Dorsolateral prefrontal cortex (tissue), 120 donors: ENCODE measurements at regions of chr3 and their contacts with region 1.

Region 1: DNA sequence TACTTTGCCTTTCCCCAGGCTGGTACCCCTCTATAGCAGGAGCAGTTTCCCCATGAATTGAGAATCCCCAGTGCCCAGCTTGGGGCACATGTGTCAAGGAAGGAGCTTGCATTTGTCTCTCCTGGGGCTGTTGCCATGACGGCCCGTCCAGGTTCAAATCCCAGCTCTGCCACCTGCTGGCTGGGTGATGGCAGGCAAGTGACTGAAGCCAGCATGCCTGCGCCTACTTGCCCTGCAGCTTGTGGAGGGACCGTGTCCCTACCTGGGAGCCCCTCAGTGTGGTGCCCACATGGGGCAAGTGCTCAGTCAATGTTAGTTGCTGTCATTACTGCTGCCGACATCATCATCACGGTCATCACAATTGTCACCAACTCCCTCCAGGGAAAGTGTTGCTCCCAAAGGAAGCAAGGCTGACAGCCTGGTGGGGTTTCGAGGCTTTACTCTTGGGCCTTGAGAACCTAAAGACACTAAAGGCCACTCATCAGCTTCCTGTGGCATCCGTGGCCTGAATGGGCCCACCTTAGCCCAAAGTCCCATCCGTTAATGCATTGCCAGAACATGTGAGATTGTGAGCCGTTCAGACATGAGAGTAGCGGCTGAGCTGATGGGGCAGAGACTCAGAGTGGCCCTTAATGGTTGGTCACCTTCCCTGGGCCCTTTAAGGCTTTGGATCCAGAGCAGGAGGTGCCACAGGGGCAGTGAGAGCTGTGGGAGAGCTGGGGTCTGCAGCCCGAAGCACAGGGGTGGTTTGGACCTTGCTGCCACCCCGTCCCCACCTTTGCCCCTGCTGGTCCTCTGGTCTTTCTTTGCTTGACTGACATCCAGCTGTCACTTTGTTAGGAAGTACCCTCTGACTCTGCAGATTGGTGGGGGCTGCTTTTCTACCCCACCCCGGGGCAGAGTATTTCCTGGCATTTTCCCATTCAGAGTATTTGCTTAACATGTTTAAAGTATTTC is 144.3 kb downstream of the DNAJB8 start:
- DNase-seq: peak in 5 of 10 donors; percentile 10 to 59 (median 49)
- H3K4me3 ChIP-seq: no peak overlapping the region
- H3K27ac ChIP-seq: no peak overlapping the region
- H3K27me3 ChIP-seq: no peaks in the 10 kb centered on the region
- CTCF ChIP-seq: peak in 54 of 56 donors; percentile 29 to 75 (median 56)

Region 2: DNA sequence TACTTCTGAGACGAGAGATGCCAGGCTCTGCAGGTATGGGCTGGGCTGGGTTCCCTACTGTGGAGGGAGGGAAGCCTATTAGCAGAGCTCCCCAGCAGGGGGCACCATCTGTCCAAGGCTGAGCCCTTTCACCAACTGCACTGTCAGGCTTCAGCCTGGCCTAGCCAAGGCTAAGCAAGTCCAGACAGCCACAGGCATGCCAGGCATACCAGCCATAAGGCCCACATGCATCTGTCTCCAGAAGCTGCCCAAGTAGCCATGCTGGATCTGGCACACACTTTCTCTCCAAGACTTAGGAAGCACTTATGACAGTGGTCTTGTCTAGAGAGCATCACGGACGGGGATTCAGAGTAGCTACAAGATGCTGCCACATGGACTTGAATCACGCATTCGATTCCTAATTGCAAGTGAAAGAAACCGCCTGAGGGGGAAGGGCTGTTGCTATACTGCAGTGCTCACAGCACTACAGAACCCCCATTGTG is 227.1 kb before region 1 on chr3:
- intact Hi-C with region 1: loop called in 1 of 2 experiments (anchors 5 kb)
- DNase-seq: peak; percentile 78 to 89 (median 87)
- H3K4me3 ChIP-seq: no peak overlapping the region
- H3K27ac ChIP-seq: peak overlapping the region in 29 of 59 donors; percentile 2 to 72 (median 43)
- H3K27me3 ChIP-seq: no peaks in the 10 kb centered on the region
- CTCF ChIP-seq: peak; percentile 60 to 93 (median 86)

Region 3: GRCh38 chr3:128153156-128154041 is 168.9 kb before region 1 on chr3 and contains the start of gene EEFSEC:
- intact Hi-C with region 1: no loop called
- DNase-seq: peak; percentile 61 to 89 (median 73)
- H3K4me3 ChIP-seq: peak within 1 kb of the TSS; percentile 74 to 99 (median 93)
- H3K27ac ChIP-seq: peak within 1 kb of the TSS in 55 of 59 donors; percentile 8 to 94 (median 82)
- H3K27me3 ChIP-seq: no peaks in the 10 kb centered on the region
- CTCF ChIP-seq: peak in 33 of 56 donors; percentile 8 to 57 (median 28)
- total RNA-seq, gene EEFSEC: 5.7 to 16.9 (median 12.9) TPM

Region 4: GRCh38 chr3:128226795-128227395 is 95.4 kb before region 1 on chr3:
- intact Hi-C with region 1: loop called in 1 of 2 experiments (anchors 2 kb)
- DNase-seq: peak in 3 of 10 donors; percentile 34 to 52 (median 40)
- H3K4me3 ChIP-seq: no peak overlapping the region
- H3K27ac ChIP-seq: no peak overlapping the region
- H3K27me3 ChIP-seq: no peaks in the 10 kb centered on the region
- CTCF ChIP-seq: peak in 55 of 56 donors; percentile 36 to 81 (median 65)